CD4-positive, alpha-beta memory T cell (primary cell): ENCODE measurements at regions of chrX and their contacts with region 1.

Region 1: DNA sequence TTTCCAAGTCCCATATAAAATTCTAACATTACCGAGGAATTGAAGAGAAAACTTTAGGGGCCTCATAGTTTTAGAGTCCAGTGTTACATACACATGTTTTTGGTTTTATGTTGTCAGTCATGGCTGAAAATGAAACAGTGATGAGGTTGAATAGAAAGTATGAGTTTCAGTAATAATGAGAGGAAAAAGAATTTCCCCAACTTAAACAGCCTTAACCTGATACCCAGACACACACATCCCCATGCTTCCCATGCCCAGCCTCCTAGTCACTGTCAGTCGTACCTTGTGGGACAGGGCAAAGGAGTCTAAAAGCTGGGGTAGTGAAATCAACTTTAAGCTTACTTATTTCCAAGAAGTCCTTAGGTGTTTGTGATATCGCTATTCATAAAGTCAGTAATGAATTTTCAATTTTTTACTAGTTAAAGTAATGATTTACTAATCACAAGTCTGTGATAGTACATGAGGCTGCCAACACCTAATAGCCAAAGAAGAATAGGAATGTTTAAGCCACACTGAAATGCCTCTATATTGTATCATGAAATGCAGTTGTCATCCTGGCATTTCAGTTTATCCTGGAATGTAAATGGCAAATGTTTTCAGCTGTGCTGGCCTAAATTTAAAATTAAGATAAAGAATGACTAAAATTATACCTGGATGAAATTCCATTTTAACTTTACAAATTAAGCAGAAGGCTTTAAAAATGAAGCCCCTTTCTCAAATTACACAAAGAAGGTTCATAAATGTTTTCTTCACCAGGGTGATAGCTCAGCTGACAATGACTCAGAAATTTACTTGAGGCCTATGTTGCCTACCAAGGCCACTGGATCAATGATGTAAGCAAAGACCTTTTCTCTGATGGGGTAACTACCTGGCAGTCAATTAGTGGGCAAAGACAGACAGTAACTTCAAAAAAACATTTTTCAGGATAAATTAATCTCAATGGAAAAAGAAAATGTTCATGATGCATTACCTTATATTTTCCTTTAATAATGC is 24.2 kb upstream of the GPR34 start:
- DNase-seq: no peak
- H3K4me3 ChIP-seq: no peak overlapping the region
- H3K4me3 Mint-ChIP-seq: no peak overlapping the region
- H3K27ac ChIP-seq: no peak overlapping the region
- H3K27ac Mint-ChIP-seq: no peak overlapping the region
- H3K4me1 ChIP-seq: peaks cover 10% of the 10 kb centered on the region
- H3K4me1 Mint-ChIP-seq: peaks cover 6 to 25% (median 14%) of the 10 kb centered on the region in 4 donors
- H3K27me3 ChIP-seq: no peaks in the 10 kb centered on the region
- H3K27me3 Mint-ChIP-seq: no peaks in the 10 kb centered on the region

Region 2: DNA sequence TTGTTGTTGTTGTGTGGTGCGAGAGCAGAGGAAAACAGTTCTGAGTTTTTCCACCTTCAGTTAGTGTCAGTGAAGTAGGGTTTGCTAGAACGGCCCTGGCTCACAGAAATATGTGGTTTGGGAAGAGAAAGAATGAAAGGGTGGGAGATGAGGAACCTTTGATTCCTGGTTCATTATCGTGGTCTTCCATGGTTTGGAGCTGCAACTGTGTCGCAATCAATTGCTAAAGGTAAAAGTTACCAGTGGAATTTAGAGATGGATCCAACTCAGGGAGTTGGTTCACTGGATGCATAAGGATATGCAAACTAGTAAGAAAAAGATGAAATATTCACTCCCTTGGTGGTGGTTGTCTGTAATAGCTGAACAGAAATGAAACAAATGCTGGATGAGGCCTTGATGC is 11.5 kb before region 1 on chrX:
- CTCF ChIA-PET with region 1: no interaction called
- POLR2A ChIA-PET with region 1: interaction called, 3 read pairs
- intact Hi-C with region 1: loop called (anchors 1 kb)
- DNase-seq: no peak
- H3K4me3 ChIP-seq: no peak overlapping the region
- H3K4me3 Mint-ChIP-seq: no peak overlapping the region
- H3K27ac ChIP-seq: no peak overlapping the region
- H3K27ac Mint-ChIP-seq: no peak overlapping the region
- H3K4me1 ChIP-seq: no peaks in the 10 kb centered on the region
- H3K4me1 Mint-ChIP-seq: peaks cover 0 to 3% (median 0%) of the 10 kb centered on the region in 4 donors
- H3K27me3 ChIP-seq: no peaks in the 10 kb centered on the region
- H3K27me3 Mint-ChIP-seq: no peaks in the 10 kb centered on the region